ENCODE measurements at regions of chr2 and their contacts with region 1.

Region 1: DNA sequence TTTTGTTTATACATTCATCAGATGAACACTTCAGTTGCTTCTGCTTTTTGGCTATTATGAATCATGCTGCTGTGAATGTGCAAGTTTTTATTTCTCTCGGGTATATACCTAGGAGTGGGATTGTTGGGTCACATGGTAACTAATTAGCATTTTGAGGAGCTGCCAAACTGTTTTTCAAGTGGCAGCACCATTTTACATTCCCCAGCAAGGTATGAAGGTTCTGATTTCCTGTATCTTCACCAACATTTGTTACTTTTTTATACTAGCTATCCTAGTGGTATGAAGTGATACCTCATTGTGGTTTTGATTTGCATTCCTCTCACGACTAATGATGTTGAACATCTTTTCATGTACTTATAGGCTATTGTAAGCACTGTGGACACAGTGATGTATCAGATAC is 53.9 kb downstream of the DYNC1I2 start:
- DNase-seq: no peak
- ATAC-seq: no peak

Region 2: GRCh38 chr2:171574149-171574795 is 166.9 kb before region 1 on chr2:
- intact Hi-C with region 1: no loop called
- DNase-seq: peak; percentile 89
- ATAC-seq: peak; percentile 95

Region 3: DNA sequence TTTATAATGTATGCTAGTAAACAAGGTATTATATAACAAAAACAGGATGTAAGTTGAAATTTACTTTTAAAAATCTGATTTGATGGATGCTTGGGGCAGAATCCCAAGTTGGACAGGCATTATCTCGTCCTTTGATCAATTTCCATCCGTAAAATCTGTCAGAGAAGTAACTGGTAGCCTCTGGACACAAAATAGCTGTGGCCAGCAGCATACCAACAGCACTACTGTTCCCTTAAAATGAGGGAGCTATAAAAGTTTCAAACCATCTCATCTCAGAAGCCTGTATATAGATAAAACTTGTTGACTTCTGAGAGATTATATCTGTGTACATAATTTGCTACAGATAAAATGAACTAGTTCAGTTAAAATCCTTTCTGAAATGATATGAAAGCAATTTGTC is 243.9 kb after region 1 on chr2:
- intact Hi-C with region 1: loop called (anchors 10 kb)
- DNase-seq: no peak
- ATAC-seq: no peak